ENCODE measurements at regions of chr6 and their contacts with region 1.

Region 1: DNA sequence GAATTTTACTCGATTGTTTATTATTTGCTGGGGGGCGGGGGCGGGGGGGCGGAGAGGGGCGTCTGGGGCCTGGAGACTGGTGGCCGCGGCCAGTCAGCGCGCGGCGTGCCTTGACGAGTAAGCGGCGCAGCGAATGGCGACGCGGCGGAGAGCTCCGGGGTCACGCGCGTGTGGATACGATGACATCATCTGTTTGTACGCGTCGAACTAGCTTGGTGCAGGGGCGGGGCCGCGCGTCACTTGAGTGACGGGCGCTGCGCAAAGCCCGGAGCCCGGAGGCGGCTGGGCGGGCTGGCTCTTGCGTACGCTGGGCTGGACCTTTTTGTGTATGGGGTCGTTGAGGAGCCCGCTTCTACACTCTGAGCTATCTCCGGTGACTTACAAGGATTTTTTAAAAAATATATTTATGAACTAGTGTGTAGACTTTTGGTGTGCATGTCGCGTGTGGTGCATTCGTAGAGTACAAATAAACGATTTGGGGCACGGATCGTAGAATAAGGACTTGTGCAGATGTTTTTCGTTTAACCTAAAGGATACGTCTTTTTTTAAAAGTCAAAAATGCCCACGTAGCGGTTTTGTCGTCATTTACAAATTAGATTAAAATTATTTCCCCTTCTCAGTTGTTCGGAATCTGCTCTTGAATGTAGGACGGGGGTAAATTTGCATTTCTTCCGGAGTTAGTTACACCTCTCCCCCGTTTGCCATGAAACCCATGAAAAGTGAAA is 2.2 kb upstream of the FOXO3 start:
- DNase-seq: peak; percentile 98 to 100 (median 99)
- ATAC-seq: peak; percentile 79 to 82
- H3K4me3 ChIP-seq: peak overlapping the region; percentile 83
- H3K27ac ChIP-seq: peak overlapping the region; percentile 100
- H3K4me1 ChIP-seq: peaks cover 3% of the 10 kb centered on the region
- H3K27me3 ChIP-seq: no peaks in the 10 kb centered on the region

Region 2: GRCh38 chr6:108294727-108295625 is 263.6 kb before region 1 on chr6 and contains the start of gene AFG1L:
- intact Hi-C with region 1: no loop called
- DNase-seq: peak; percentile 95 to 98 (median 97)
- ATAC-seq: peak; percentile 100
- H3K4me3 ChIP-seq: peak within 1 kb of the TSS; percentile 86
- H3K27ac ChIP-seq: peak within 1 kb of the TSS; percentile 77
- H3K4me1 ChIP-seq: no peaks in the 10 kb centered on the region
- H3K27me3 ChIP-seq: no peaks in the 10 kb centered on the region
- total RNA-seq, gene AFG1L: 8.9 to 14.5 (median 10.5) TPM

Region 3: DNA sequence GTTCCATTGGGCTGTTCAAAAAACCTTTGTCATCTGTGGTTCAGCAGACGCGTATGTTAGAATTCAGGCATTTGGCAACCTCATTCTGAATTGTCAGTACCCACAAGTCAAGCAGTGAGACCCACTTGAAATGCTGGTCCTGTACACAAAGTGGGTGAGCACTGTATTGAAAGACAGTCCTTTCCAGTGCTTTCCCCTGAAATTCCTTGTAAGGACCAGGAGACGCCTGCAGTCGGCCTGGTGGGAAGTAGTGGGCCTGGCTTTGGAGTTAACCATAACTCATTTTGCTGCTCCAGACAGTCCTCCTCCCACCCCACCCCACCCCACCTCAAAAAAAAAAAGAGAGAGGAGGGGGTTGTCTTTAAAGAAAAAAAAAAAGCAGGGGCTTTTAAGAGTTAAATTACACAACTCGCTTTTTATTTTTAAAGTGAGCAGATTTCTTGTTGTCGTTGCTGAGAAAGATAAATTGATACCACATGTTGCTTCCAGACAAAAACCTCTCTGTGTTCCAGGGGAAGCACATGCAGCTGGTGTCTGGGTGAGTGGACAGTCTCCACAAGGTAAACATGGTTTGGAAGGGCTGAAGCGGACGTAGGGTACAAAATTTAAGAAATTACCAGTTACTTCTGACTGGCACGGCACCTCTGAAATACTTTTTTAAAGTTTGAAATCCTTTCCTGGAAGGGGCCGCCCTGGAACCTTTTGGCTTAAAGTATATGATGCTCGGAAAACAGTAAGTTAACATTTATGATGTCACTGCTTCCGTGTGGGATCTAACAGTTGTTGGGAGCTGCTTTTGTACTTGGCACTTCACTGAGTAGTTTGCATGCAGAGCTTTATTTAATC is 97.5 kb after region 1 on chr6:
- intact Hi-C with region 1: loop called in 3 of 4 experiments (anchors 5 to 10 kb)
- DNase-seq: peak in 1 of 3 donors; percentile 41
- ATAC-seq: peak; percentile 59 to 77
- H3K4me3 ChIP-seq: peak overlapping the region; percentile 23
- H3K27ac ChIP-seq: peak overlapping the region; percentile 78
- H3K4me1 ChIP-seq: peaks cover 31% of the 10 kb centered on the region
- H3K27me3 ChIP-seq: no peaks in the 10 kb centered on the region

Region 4: DNA sequence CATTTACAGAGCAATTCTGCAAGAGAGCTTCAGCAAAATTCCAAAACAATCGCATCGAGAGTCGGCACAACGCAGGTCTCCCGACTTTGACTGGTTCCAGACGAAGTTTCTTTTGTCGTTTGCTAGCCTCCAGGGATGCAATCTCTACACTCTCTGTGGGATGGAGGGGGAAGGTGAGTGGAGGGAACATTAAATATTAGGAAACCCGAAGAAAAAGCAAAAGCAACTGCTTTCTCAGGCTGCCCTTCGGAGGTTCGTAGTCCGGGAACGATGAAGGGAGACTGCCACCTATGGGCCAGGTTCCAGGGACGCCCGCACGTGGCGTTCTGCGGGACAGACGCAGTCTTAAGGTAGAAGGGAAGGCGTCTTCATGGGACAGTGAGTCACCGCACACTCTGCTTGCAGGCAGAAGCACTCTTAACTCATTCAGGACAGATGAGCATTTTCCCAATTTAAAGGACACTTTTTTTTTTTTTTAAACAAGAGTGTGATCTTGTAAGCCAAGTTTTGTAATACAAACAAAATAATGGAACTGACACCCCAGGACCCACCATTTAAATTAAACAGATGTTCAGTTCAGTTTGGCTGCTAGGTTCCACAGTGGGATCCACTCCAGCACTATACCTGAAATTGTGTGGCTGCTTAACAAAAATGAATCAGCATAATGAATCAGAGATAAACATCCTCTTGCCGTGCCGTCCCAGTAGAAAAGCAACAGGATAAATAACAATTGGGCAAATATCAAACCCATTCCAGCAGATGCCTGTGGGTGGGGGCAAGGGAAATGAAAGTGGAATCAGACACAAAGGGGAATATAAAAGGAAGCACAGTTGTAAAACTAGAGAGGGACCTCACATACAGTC is 223.9 kb after region 1 on chr6:
- intact Hi-C with region 1: loop called in 3 of 4 experiments (anchors 2 to 10 kb)
- DNase-seq: peak; percentile 82 to 94 (median 90)
- ATAC-seq: peak; percentile 94 to 95
- H3K4me3 ChIP-seq: peak overlapping the region; percentile 63
- H3K27ac ChIP-seq: no peak overlapping the region
- H3K4me1 ChIP-seq: no peaks in the 10 kb centered on the region
- H3K27me3 ChIP-seq: no peaks in the 10 kb centered on the region

Region 5: DNA sequence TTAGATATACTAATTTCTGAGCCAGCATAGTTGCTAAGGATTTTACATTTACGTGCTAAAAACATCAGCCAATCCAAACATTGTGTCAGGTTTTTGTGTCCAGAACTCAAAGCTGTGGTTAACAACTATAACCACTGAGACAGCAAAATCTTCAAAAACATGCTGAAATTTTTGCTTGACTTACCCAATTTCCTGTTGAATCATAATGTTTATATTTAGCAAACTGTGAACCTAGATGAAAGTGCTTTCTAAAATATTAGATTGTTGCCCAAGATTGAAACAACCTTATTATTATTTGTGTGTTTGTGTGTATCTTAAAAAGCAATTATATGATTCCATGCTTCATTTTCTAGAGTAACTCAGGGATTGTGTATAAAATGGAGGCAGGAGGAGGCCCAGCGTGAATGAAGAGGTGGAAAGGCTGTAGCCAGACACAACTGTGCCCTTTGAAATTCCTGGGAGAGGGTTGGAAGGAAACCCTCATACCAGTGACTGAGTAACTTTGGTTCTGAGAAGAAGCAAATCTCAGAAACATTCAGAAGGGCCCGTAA is 337.7 kb after region 1 on chr6:
- intact Hi-C with region 1: loop called in 1 of 4 experiments (anchors 5 kb)
- DNase-seq: no peak
- ATAC-seq: peak in 1 of 2 donors; percentile 17
- H3K4me3 ChIP-seq: no peak overlapping the region
- H3K27ac ChIP-seq: peak overlapping the region; percentile 75
- H3K4me1 ChIP-seq: peaks cover 2% of the 10 kb centered on the region
- H3K27me3 ChIP-seq: no peaks in the 10 kb centered on the region

Region 6: GRCh38 chr6:109073344-109074132 is 515.0 kb after region 1 on chr6:
- intact Hi-C with region 1: loop called in 2 of 4 experiments (anchors 5 kb)
- DNase-seq: no peak
- ATAC-seq: peak; percentile 58 to 64
- H3K4me3 ChIP-seq: no peak overlapping the region
- H3K27ac ChIP-seq: no peak overlapping the region
- H3K4me1 ChIP-seq: peaks cover 4% of the 10 kb centered on the region
- H3K27me3 ChIP-seq: no peaks in the 10 kb centered on the region